IMR-90 (cell line): ENCODE measurements at regions of chr7 and their contacts with region 1.

Region 1: DNA sequence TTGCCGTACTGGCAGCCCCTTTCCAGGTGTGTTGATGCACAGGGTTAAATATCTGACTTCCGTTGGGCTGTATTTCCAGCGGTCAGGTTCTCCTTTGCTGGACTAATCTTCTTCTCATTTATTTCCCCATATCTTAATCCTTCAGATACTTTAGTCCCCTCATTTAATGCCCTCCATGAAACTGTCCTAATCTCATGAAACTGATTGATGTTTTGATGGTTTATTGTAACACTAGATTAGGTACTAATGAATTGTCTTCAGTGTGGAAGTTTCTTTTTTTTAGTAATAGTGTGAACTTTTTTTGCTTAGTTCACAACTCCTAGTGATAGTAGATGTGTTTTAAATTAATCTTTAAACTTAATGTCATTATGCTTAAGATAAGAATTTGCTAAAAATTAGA is 6.3 kb downstream of the CUL1 start:
- DNase-seq: no peak
- ATAC-seq: no peak
- H3K4me3 ChIP-seq: no peak overlapping the region
- H3K27ac ChIP-seq: no peak overlapping the region
- H3K4me1 ChIP-seq: peaks cover 13% of the 10 kb centered on the region
- H3K27me3 ChIP-seq: no peaks in the 10 kb centered on the region
- CTCF ChIP-seq: no peak
- POLR2A ChIP-seq: no peak
- RAD21 ChIP-seq: no peak

Region 2: GRCh38 chr7:148623586-148624282 is 81.2 kb before region 1 on chr7:
- CTCF ChIA-PET with region 1: no interaction called
- POLR2A ChIA-PET with region 1: no interaction called
- dilution Hi-C with region 1: no loop called
- in situ Hi-C with region 1: no loop called
- intact Hi-C with region 1: no loop called
- DNase-seq: peak; percentile 5
- ATAC-seq: no peak
- H3K4me3 ChIP-seq: no peak overlapping the region
- H3K27ac ChIP-seq: no peak overlapping the region
- H3K4me1 ChIP-seq: no peaks in the 10 kb centered on the region
- H3K27me3 ChIP-seq: peaks cover 16% of the 10 kb centered on the region
- CTCF ChIP-seq: no peak
- POLR2A ChIP-seq: no peak
- RAD21 ChIP-seq: no peak

Region 3: DNA sequence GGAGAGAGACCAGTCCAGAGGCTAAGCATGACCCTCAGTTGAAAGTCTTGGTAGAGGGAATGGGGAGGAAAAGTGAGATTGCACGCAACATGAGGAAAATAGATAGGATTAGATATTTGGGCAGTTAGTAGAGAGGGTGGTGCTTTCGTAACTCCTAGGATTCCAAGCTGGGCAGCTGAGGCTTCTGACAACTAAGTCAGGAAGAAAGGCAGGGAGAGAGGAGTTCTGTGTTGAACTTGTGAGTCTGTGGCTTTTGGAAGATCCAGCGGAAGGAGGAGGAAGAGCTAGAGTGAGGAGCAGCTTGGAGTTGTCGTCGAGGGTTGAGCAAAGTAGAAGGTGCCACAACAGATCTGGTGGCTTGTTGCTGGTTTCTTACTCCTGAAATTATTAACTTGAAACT is 15.5 kb after region 1 on chr7:
- CTCF ChIA-PET with region 1: interaction called, 3 read pairs
- POLR2A ChIA-PET with region 1: no interaction called
- dilution Hi-C with region 1: no loop called
- in situ Hi-C with region 1: no loop called
- intact Hi-C with region 1: loop called (anchors 2 kb)
- DNase-seq: no peak
- ATAC-seq: peak; percentile 32; the same call in 1 of the 2 replicates
- H3K4me3 ChIP-seq: no peak overlapping the region
- H3K27ac ChIP-seq: no peak overlapping the region
- H3K4me1 ChIP-seq: peaks cover 22% of the 10 kb centered on the region
- H3K27me3 ChIP-seq: no peaks in the 10 kb centered on the region
- CTCF ChIP-seq: no peak
- POLR2A ChIP-seq: no peak
- RAD21 ChIP-seq: no peak